H1 (cell line): ENCODE measurements at regions of chr20 and their contacts with region 1.

Region 1: DNA sequence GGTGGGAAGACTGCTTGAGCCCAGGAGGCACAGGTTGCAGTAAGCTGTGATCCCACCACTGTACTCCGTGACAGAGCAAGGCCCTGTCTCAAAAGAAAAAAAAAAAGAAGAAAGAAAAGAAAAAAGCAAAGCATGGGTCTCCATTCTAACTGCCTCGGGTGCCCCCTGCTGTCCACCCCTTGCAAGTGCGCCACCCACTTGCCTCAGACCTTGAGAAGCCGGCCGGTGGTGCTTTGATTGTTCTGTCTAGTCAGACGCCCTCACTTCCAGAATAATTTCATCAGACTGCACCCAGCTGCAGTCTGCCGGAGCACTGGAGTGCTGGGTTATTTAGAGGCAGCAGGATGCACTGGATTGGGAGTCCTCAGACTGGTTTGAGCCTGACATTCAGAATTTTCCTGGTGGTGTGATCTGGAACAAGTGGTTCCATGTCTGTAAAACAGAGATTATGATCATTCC is 17.6 kb upstream of the TM9SF4 start:
- DNase-seq: peak; percentile 62 to 93
- H3K4me3 ChIP-seq: no peak overlapping the region
- H3K27ac ChIP-seq: no peak overlapping the region
- H3K4me1 ChIP-seq: peaks cover 16 to 26% (median 24%) of the 10 kb centered on the region in 4 experiments
- H3K27me3 ChIP-seq: no peaks in the 10 kb centered on the region; a peak in 1 of 7 replicates
- CTCF ChIP-seq: peak; percentile 95 to 97 (median 96)
- EP300 ChIP-seq: 0 out of 3 replicates have a peak, but pooled peaks of 1 of the 2 experiments have one; percentile 57
- POLR2A ChIP-seq: no peak
- RAD21 ChIP-seq: peak; percentile 89 to 93

Region 2: DNA sequence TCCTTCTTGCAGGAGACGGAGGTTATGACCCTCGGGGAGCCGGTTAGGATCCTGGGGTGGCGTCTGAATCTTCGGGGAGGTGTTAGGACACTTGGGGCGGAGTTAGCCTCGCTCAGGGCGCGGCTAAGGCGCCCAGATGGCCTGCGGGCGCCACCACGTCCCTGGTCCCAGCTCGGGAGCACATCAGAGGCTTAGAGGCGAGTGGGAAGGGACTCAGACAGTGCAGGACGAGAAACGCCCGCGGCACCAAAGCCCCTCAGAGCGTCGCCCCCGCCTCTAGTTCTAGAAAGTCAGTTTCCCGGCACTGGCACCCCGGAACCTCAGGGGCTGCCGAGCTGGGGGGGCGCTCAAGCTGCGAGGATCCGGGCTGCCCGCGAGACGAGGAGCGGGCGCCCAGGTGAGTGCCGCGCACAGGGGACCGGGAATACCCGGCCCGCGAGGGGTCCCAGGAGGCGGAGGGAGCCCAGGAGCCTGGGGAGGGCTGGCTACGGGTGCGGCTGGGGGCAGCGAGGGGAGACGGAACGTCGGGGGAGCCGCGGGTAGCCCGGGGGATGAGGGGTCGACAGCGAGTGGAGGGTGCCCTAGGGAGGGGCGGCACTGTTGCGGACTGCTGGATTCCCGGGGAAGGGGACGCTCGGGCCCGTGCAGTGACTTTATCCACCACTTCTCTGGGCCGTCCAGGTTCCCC is 39.7 kb before region 1 on chr20 and contains the start of gene HCK:
- CTCF ChIA-PET with region 1: interaction called, 10 read pairs
- POLR2A ChIA-PET with region 1: interaction called, 4 read pairs
- DNase-seq: peak in 1 of 2 experiments; percentile 58
- H3K4me3 ChIP-seq: peak within 1 kb of the TSS; percentile 35 to 75 (median 66)
- H3K27ac ChIP-seq: no peak within 1 kb of the TSS
- H3K4me1 ChIP-seq: peaks cover 2 to 10% (median 6%) of the 10 kb centered on the region in 4 experiments; a peak in 5 of 7 replicates
- H3K27me3 ChIP-seq: peaks cover 3 to 45% (median 33%) of the 10 kb centered on the region in 4 experiments
- CTCF ChIP-seq: no peak
- EP300 ChIP-seq: no peak
- POLR2A ChIP-seq: no peak
- RAD21 ChIP-seq: no peak
- total RNA-seq, gene HCK: 0.37 and 0.82 TPM in 2 replicates

Region 3: DNA sequence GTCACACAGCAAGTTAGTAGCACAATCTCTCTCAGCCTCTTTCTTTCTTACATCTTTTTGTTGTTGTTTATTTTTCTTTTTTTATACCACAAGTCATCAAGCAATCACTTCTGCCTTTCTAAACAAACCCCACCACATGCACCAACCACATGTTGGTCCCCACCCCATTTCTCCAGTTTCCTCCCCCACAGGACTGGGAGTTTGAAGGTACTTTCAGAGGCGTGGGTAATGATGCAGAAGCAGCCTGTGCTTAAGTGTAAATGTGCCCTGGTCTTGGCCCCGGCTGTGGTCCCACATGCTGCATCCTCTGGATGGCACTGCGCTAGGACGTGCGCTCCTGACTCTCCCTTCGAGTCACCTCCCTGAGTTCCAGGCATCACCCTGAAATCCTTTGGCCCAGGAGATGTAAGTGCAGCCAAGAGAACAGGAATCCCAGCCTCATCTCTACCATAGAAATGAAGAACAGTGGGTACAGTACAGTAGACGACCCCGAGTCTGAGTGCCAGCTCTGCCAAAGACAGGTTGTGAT is 34.2 kb before region 1 on chr20:
- CTCF ChIA-PET with region 1: interaction called, 11 read pairs
- POLR2A ChIA-PET with region 1: interaction called, 4 read pairs
- DNase-seq: no peak
- H3K4me3 ChIP-seq: no peak overlapping the region
- H3K27ac ChIP-seq: no peak overlapping the region
- H3K4me1 ChIP-seq: peaks cover 0 to 5% (median 4%) of the 10 kb centered on the region in 4 experiments; a peak in 5 of 7 replicates
- H3K27me3 ChIP-seq: peaks cover 0 to 14% (median 11%) of the 10 kb centered on the region in 4 experiments; a peak in 5 of 7 replicates
- CTCF ChIP-seq: no peak
- EP300 ChIP-seq: no peak
- POLR2A ChIP-seq: no peak
- RAD21 ChIP-seq: 0 out of 4 replicates have a peak, but pooled peaks of 1 of the 2 experiments have one; percentile 8

Region 4: DNA sequence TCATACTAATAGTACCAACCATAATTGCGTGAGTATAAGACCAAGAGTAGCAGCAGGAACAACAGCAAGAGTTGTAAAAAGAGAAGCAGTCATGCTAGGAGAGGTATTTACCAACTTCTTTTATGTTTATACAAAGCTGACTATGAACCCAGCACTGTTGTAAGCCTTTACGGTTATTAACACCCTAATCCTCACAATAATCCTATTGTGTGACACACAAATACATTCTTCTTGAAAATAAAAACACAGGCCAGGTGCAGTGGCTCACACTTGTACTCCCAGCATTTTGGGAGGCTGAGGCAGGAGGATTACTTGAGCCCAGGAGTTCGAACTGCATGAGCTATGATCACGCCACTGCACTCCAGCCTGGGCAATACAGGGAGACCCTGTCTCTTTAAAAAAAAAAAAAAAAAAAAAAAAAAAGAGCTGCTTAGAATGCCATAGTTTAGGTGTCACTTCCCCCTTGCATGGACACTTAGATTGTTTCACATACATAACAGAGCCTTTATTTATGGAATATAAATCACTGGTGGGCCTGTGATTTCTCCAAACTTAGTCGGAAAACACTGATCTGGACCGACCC is 19.7 kb before region 1 on chr20:
- CTCF ChIA-PET with region 1: interaction called, 31 read pairs
- POLR2A ChIA-PET with region 1: interaction called, 3 read pairs
- DNase-seq: no peak
- H3K4me3 ChIP-seq: no peak overlapping the region
- H3K27ac ChIP-seq: no peak overlapping the region
- H3K4me1 ChIP-seq: peaks cover 0 to 3% (median 0%) of the 10 kb centered on the region in 4 experiments; a peak in 2 of 7 replicates
- H3K27me3 ChIP-seq: no peaks in the 10 kb centered on the region
- CTCF ChIP-seq: no peak
- EP300 ChIP-seq: no peak
- POLR2A ChIP-seq: no peak
- RAD21 ChIP-seq: no peak

Region 5: DNA sequence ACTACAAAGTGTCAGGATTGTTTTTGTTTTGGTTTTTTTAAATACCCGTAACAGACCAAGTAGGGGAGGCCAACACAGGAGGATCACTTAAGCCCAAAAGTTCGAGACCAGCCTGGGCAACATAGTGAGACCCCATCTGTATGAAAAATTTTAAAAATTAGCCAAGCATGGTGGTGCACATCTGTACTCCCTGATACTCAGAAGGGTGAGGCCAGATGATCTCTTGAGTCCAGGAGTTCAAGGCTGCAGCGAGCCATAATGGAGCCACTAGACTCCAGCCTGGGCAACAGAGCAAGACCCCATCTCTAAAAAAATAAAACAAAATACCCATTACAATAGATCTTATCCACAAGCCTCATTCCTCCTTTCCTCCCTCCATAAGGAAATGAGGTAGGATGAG is 11.1 kb before region 1 on chr20:
- CTCF ChIA-PET with region 1: interaction called, 15 read pairs
- POLR2A ChIA-PET with region 1: interaction called, 3 read pairs
- DNase-seq: no peak
- H3K4me3 ChIP-seq: no peak overlapping the region
- H3K27ac ChIP-seq: no peak overlapping the region
- H3K4me1 ChIP-seq: peaks cover 0 to 3% (median under 1%) of the 10 kb centered on the region in 4 experiments; a peak in 4 of 7 replicates
- H3K27me3 ChIP-seq: no peaks in the 10 kb centered on the region
- CTCF ChIP-seq: no peak
- EP300 ChIP-seq: no peak
- POLR2A ChIP-seq: no peak
- RAD21 ChIP-seq: no peak

Region 6: GRCh38 chr20:32109392-32110172 is 17.7 kb after region 1 on chr20 and contains the start of gene TM9SF4:
- CTCF ChIA-PET with region 1: interaction called, 22 read pairs
- POLR2A ChIA-PET with region 1: interaction called, 14 read pairs
- DNase-seq: peak; percentile 80 to 95
- H3K4me3 ChIP-seq: peak within 1 kb of the TSS; percentile 81 to 100 (median 96)
- H3K27ac ChIP-seq: peak within 1 kb of the TSS; percentile 100
- H3K4me1 ChIP-seq: peaks cover 0 to 3% (median 0%) of the 10 kb centered on the region in 4 experiments; a peak in 3 of 7 replicates
- H3K27me3 ChIP-seq: no peaks in the 10 kb centered on the region
- CTCF ChIP-seq: peak in 1 of 3 experiments; percentile 10; a peak in 1 of 4 replicates
- EP300 ChIP-seq: no peak; a peak in 1 of 3 replicates
- POLR2A ChIP-seq: peak; percentile 92 to 99
- RAD21 ChIP-seq: no peak
- total RNA-seq, gene TM9SF4: 38.4 and 40.5 TPM in 2 replicates

Region 7: GRCh38 chr20:32123088-32123487 is 31.2 kb after region 1 on chr20:
- CTCF ChIA-PET with region 1: no interaction called
- POLR2A ChIA-PET with region 1: no interaction called
- DNase-seq: no peak
- H3K4me3 ChIP-seq: no peak overlapping the region
- H3K27ac ChIP-seq: no peak overlapping the region
- H3K4me1 ChIP-seq: peaks cover 0 to 6% (median 0%) of the 10 kb centered on the region in 4 experiments; a peak in 1 of 7 replicates
- H3K27me3 ChIP-seq: no peaks in the 10 kb centered on the region
- CTCF ChIP-seq: no peak
- EP300 ChIP-seq: no peak
- POLR2A ChIP-seq: no peak
- RAD21 ChIP-seq: no peak